Activated naive CD4-positive, alpha-beta T cell treated with anti-CD3 and anti-CD28 coated beads for 36 hours (primary cell): ENCODE measurements at regions of chr19 and their contacts with region 1.

Region 1: DNA sequence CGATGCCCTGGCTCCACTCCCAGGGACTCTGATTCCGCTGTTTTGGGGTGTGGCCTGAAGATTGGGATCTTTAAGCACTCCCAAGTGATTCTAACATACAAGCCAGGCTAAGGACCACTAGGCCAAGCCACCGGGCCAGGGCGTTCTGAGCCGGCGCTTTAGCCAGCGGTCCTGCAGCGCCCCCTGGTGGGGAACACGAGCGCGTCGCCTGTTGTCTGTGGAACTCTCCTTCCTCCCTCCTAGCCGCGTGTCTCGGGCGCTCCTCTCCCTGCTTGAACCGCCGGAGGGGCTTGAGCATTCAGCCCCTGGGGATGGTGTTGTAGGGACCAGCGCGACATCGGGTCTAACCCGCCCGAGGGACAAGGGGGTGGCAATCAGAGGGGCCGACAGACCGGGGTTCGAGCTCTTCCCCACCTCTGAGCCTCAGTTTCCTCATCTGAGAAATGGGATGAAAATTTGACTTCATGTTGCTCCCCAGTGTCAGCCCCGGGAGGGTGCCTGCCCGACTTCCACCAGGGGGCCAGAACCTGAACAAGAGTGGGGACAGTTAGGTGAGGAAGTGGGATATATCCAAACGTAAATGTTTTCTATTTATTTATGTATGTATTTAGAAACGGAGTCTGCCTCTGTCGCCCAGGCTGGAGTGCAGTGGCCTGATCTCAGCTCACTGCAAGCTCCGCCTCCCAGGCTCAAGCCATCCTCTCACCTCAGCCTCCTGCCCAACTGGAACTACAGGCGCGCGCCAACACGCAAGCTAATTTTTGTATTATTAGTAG is 18.0 kb upstream of the PNMA8B start:
- DNase-seq: peak; percentile 86
- H3K4me3 Mint-ChIP-seq: no peak overlapping the region
- H3K27ac Mint-ChIP-seq: no peak overlapping the region
- H3K4me1 Mint-ChIP-seq: peaks cover 8% of the 10 kb centered on the region
- H3K27me3 Mint-ChIP-seq: peaks cover 2% of the 10 kb centered on the region

Region 2: GRCh38 chr19:46392243-46392801 is 121.3 kb before region 1 on chr19:
- CTCF ChIA-PET with region 1: interaction called, 22 read pairs
- intact Hi-C with region 1: loop called (anchors 1 kb)
- DNase-seq: no peak
- H3K4me3 Mint-ChIP-seq: no peak overlapping the region
- H3K27ac Mint-ChIP-seq: no peak overlapping the region
- H3K4me1 Mint-ChIP-seq: peaks cover 1% of the 10 kb centered on the region
- H3K27me3 Mint-ChIP-seq: no peaks in the 10 kb centered on the region

Region 3: GRCh38 chr19:46413262-46414031 is 100.2 kb before region 1 on chr19 and contains the start of gene CCDC8:
- CTCF ChIA-PET with region 1: no interaction called
- intact Hi-C with region 1: no loop called
- DNase-seq: no peak
- H3K4me3 Mint-ChIP-seq: no peak within 1 kb of the TSS
- H3K27ac Mint-ChIP-seq: no peak within 1 kb of the TSS
- H3K4me1 Mint-ChIP-seq: peaks cover 8% of the 10 kb centered on the region
- H3K27me3 Mint-ChIP-seq: peaks cover 63% of the 10 kb centered on the region
- total RNA-seq, gene CCDC8: not detected

Region 4: DNA sequence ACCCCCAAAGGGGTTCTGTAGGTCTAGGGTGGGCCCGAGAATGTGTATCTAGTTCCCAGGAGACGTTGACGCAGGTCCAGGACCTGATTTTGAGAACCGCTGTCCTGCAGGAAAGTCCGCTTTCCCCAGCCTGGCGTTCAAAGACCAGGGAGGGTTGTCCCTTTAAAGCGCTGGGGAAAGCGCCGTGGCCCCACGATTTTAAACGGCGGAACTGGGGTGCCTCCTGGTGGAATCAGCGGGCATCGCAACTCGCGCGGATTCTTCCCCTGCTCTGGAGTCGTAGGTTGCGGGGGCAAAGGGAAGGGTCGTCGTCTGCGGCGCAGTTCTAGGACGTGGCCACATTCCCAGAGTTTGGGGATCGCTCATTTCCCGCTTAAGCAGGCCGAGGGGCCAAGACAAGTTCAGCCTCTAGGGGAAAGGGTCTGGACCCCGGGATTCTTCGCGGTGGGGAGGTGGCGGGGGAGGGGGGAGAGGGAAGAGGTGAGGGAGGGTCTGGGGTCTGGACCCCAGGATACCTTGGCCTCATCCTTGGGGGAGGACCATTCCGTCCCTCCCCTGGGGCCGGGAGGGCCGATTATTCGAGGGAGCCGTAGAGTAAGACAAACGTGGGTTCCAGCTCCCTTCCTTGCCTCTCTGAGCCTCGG is 25.7 kb before region 1 on chr19:
- CTCF ChIA-PET with region 1: interaction called, 9 read pairs
- intact Hi-C with region 1: loop called (anchors 1 kb)
- DNase-seq: peak; percentile 82
- H3K4me3 Mint-ChIP-seq: no peak overlapping the region
- H3K27ac Mint-ChIP-seq: no peak overlapping the region
- H3K4me1 Mint-ChIP-seq: peaks cover 28% of the 10 kb centered on the region
- H3K27me3 Mint-ChIP-seq: peaks cover 54% of the 10 kb centered on the region

Region 5: GRCh38 chr19:46537136-46538097 is 23.8 kb after region 1 on chr19:
- CTCF ChIA-PET with region 1: interaction called, 203 read pairs
- intact Hi-C with region 1: loop called (anchors 1 kb)
- DNase-seq: peak; percentile 75
- H3K4me3 Mint-ChIP-seq: no peak overlapping the region
- H3K27ac Mint-ChIP-seq: no peak overlapping the region
- H3K4me1 Mint-ChIP-seq: peaks cover 8% of the 10 kb centered on the region
- H3K27me3 Mint-ChIP-seq: no peaks in the 10 kb centered on the region